ENCODE measurements at regions of chr17 and their contacts with region 1.

Region 1: DNA sequence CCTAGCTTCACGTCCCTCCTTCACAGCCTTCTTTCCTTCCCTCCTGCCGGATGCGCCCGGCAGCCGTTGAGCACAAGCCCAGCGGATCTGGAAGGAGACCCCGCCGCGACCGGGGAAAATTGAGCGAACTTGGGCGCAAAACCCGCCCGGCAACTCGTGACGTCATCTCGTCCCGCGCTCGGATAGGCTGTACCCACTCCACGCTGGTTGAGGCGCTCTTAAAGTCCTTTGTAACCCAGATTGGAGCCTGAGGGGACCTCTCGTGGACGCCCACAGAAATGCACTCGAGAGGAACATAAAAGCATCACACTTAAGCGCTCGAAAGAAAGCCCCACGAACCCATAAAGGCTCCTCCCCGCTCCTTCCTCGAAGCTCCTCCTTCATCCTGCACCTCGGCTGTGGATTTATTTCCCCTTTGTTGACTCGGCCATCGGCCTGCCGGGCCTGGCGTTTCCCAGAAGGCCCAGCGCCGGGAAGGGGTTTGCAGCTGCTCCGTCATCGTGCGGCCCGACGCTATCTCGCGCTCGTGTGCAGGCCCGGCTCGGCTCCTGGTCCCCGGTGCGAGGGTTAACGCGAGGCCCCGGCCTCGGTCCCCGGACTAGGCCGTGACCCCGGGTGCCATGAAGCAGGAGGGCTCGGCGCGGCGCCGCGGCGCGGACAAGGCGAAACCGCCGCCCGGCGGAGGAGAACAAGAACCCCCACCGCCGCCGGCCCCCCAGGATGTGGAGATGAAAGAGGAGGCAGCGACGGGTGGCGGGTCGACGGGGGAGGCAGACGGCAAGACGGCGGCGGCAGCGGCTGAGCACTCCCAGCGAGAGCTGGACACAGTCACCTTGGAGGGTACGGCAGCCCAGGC is at the start of gene PSMD3:
- DNase-seq: peak; percentile 100
- ATAC-seq: peak; percentile 95
- H3K4me3 ChIP-seq: peak within 1 kb of the TSS; percentile 80
- H3K27ac ChIP-seq: peak within 1 kb of the TSS; percentile 54
- H3K4me1 ChIP-seq: peaks cover 8% of the 10 kb centered on the region; the same call in 1 of the 2 replicates
- H3K27me3 ChIP-seq: no peaks in the 10 kb centered on the region
- CTCF ChIP-seq: peak; percentile 98
- POLR2A ChIP-seq: peak; percentile 89
- RAD21 ChIP-seq: peak; percentile 92
- total RNA-seq, gene PSMD3: 123 and 125 TPM in 2 replicates

Region 2: GRCh38 chr17:39473310-39473709 is 507.3 kb before region 1 on chr17:
- CTCF ChIA-PET with region 1: no interaction called
- POLR2A ChIA-PET with region 1: no interaction called
- dilution Hi-C with region 1: no loop called
- in situ Hi-C with region 1: no loop called
- intact Hi-C with region 1: no loop called
- DNase-seq: no peak
- ATAC-seq: no peak
- H3K4me3 ChIP-seq: no peak overlapping the region
- H3K27ac ChIP-seq: no peak overlapping the region
- H3K4me1 ChIP-seq: no peaks in the 10 kb centered on the region
- H3K27me3 ChIP-seq: no peaks in the 10 kb centered on the region
- CTCF ChIP-seq: no peak
- POLR2A ChIP-seq: no peak
- RAD21 ChIP-seq: no peak

Region 3: DNA sequence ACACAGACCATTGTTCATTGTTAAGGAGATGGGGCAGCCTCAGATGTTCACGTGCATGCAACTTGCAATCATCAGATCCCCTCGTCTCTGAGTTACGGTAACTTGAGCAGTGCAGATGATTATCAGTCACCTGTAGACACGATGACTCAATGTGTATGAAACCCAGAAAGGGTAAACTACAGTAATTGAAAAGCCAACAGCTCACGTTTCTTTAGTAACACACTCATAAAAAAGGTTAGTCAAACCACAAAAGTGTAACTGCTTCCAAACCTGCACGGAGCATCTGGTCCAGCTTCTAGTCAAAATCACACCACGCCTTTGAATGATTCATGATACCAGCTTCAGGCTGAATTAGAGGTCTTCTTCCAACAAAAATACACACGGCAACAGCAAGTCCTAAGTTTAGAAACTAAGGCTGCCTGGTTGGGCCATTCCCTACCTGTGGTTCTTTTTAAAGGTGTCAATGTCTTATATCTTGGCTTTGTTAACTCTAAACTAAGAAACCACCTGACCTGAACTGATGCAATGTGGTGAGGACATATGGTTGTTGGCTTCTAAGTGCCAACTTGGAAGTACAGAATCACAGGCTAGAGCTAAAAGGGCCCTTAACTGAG is 210.5 kb before region 1 on chr17:
- CTCF ChIA-PET with region 1: no interaction called
- POLR2A ChIA-PET with region 1: no interaction called
- dilution Hi-C with region 1: no loop called
- in situ Hi-C with region 1: loop called (anchors 10 kb)
- intact Hi-C with region 1: no loop called
- DNase-seq: peak; percentile 32
- ATAC-seq: no peak
- H3K4me3 ChIP-seq: no peak overlapping the region
- H3K27ac ChIP-seq: no peak overlapping the region
- H3K4me1 ChIP-seq: no peaks in the 10 kb centered on the region
- H3K27me3 ChIP-seq: peaks cover 64% of the 10 kb centered on the region
- CTCF ChIP-seq: no peak
- POLR2A ChIP-seq: no peak
- RAD21 ChIP-seq: no peak

Region 4: DNA sequence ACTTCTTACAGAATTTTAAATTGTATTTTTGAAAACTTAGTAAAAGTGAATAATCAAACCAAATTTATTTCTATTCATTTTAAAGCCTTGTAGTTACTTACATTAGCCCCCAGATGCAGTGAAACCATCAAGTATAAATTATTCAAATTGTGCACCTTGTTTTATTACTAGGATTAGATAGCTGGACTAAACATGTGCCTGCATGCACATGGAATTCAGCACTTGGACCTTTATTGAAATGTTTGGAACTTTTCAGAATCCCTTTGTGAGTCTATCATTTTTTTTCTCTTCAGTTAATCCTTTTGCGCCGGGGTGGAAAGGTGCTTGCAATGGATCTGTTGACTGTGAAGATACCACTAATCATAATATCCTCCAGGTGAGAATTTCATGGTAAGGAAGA is 107.8 kb before region 1 on chr17:
- CTCF ChIA-PET with region 1: interaction called, 4 read pairs
- POLR2A ChIA-PET with region 1: no interaction called
- dilution Hi-C with region 1: no loop called
- in situ Hi-C with region 1: no loop called
- intact Hi-C with region 1: loop called (anchors 1 kb)
- DNase-seq: peak; percentile 31
- ATAC-seq: peak; percentile 57
- H3K4me3 ChIP-seq: no peak overlapping the region
- H3K27ac ChIP-seq: no peak overlapping the region
- H3K4me1 ChIP-seq: no peaks in the 10 kb centered on the region
- H3K27me3 ChIP-seq: peaks cover 29% of the 10 kb centered on the region
- CTCF ChIP-seq: peak; percentile 44
- POLR2A ChIP-seq: no peak
- RAD21 ChIP-seq: peak; percentile 54

Region 5: GRCh38 chr17:39963829-39964228 is 16.8 kb before region 1 on chr17:
- CTCF ChIA-PET with region 1: interaction called, 23 read pairs
- POLR2A ChIA-PET with region 1: interaction called, 3 read pairs
- dilution Hi-C with region 1: no loop called
- in situ Hi-C with region 1: no loop called
- intact Hi-C with region 1: loop called (anchors 1 kb)
- DNase-seq: no peak
- ATAC-seq: no peak
- H3K4me3 ChIP-seq: no peak overlapping the region
- H3K27ac ChIP-seq: no peak overlapping the region
- H3K4me1 ChIP-seq: no peaks in the 10 kb centered on the region
- H3K27me3 ChIP-seq: peaks cover 35% of the 10 kb centered on the region
- CTCF ChIP-seq: no peak
- POLR2A ChIP-seq: no peak
- RAD21 ChIP-seq: no peak

Region 6: GRCh38 chr17:40331743-40332641 is 351.4 kb after region 1 on chr17:
- CTCF ChIA-PET with region 1: no interaction called
- POLR2A ChIA-PET with region 1: no interaction called
- dilution Hi-C with region 1: no loop called
- in situ Hi-C with region 1: no loop called
- intact Hi-C with region 1: no loop called
- DNase-seq: no peak
- ATAC-seq: peak; percentile 77
- H3K4me3 ChIP-seq: no peak overlapping the region
- H3K27ac ChIP-seq: peak overlapping the region; percentile 86
- H3K4me1 ChIP-seq: peaks cover 50% of the 10 kb centered on the region
- H3K27me3 ChIP-seq: no peaks in the 10 kb centered on the region
- CTCF ChIP-seq: no peak
- POLR2A ChIP-seq: no peak
- RAD21 ChIP-seq: no peak